ENCODE measurements at regions of chr4 and their contacts with region 1.

Region 1: DNA sequence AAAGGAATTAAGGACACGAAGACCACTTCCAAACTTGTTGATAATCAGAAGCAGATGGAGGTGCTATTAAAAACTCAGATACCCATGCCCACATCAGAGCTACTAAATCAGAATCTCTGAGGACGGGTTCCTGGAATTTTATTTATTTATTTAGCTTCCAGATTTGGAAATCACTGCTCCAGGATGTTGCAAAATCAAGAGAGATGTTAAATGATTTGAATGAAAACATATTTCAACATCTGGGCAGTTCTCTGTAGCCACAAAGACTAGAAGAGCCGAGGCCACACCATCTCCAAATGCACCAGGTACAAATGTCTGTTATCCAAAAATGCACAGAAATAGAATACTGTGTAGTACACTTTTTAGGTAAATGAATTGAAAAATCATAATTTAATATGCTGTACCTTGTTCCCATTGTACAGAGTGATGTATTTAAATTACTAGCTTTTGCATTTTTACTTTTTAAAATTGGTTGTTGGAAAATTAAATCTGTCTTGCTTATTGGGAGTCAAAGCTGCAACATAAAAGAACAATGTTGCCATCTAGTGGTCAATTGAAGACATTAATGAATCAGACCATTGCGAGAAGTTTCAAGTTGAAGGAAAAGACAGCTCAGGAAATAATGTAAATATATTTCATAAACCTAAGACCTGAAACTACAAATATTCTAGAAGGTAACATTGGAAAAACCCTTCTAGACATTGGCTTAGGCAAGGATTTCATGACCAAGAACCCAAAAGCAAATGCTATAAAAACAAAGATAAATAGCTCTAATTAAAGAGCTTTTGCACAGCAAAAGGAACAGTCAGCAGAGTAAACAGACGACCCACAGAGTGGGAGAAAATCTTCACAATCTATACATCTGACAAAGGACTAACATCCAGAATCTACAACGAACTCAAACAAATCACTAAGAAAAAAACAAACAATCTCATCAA is 151.3 kb upstream of the TTC29 start:
- DNase-seq: no peak
- H3K4me3 Mint-ChIP-seq: no peak overlapping the region
- H3K27ac Mint-ChIP-seq: no peak overlapping the region
- H3K4me1 Mint-ChIP-seq: no peaks in the 10 kb centered on the region
- H3K27me3 Mint-ChIP-seq: peaks cover 2% of the 10 kb centered on the region

Region 2: DNA sequence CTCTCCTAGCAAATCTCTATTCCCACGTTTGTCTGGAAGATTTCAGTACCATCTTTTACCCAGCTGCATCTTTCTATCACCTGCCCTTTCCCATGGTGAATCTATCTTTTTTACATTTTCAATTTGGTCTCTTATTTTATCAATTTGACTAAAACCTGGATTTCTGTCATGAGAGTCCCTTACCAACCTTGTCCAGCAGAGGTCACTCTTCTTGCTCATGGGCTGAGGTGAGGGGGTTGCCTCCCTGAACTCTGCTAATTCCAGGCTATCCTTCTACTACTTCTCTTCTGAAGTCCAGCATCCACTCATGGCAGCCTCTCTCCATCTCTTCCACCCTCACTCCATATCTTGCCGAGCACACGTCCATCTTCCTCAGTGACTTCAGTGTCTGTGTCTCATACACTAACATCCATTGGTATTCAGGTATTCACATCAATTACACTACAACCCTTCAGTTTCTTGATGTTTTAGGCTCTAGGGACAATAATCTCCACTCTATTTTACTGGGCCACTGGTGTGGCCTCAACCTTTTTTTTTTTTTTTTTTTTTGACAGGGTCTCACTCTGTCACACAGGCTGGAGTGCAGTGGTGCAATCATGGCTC is 1140.5 kb before region 1 on chr4:
- intact Hi-C with region 1: loop called (anchors 5 kb)
- DNase-seq: peak; percentile 82
- H3K4me3 Mint-ChIP-seq: no peak overlapping the region
- H3K27ac Mint-ChIP-seq: no peak overlapping the region
- H3K4me1 Mint-ChIP-seq: peaks cover 2% of the 10 kb centered on the region
- H3K27me3 Mint-ChIP-seq: peaks cover 6% of the 10 kb centered on the region

Region 3: DNA sequence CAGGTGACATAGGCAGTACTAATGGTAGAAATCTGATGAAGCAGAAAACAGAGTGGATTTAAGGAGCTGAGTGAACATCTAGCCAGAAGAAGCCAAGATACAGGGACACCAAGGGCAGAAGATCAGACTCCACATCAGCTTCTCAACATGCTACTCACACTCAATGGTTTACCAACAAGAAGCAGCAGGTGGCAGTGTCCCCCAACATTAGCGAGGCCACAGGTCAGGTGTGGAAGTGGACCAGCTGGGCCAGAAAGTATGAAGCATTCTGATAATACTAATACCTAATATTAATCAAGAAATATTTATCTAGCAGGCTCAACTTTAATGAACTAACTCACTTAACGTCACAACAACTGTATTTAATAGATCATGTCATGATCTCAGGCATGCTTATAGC is 77.9 kb before region 1 on chr4:
- intact Hi-C with region 1: loop called (anchors 1 kb)
- DNase-seq: peak; percentile 85
- H3K4me3 Mint-ChIP-seq: no peak overlapping the region
- H3K27ac Mint-ChIP-seq: no peak overlapping the region
- H3K4me1 Mint-ChIP-seq: no peaks in the 10 kb centered on the region
- H3K27me3 Mint-ChIP-seq: peaks cover 2% of the 10 kb centered on the region

Measured in activated CD4-positive, alpha-beta T cell treated with anti-CD3 and anti-CD28 coated beads, Interleukin-2, amount 10 ng/mL, durations not matched to agents 24 days and 14 days (primary cell).